ENCODE measurements at regions of chr1 and their contacts with region 1.

Region 1: GRCh38 chr1:1206376-1207260 is at the start of gene TNFRSF18:
- DNase-seq: no peak
- ATAC-seq: peak; percentile 32
- H3K4me3 Mint-ChIP-seq: peak within 1 kb of the TSS; percentile 61
- H3K27ac Mint-ChIP-seq: peak within 1 kb of the TSS; percentile 43
- H3K4me1 Mint-ChIP-seq: peaks cover 31% of the 10 kb centered on the region
- H3K27me3 Mint-ChIP-seq: no peaks in the 10 kb centered on the region
- total RNA-seq, gene TNFRSF18: 17.5 to 18.8 TPM

Region 2: DNA sequence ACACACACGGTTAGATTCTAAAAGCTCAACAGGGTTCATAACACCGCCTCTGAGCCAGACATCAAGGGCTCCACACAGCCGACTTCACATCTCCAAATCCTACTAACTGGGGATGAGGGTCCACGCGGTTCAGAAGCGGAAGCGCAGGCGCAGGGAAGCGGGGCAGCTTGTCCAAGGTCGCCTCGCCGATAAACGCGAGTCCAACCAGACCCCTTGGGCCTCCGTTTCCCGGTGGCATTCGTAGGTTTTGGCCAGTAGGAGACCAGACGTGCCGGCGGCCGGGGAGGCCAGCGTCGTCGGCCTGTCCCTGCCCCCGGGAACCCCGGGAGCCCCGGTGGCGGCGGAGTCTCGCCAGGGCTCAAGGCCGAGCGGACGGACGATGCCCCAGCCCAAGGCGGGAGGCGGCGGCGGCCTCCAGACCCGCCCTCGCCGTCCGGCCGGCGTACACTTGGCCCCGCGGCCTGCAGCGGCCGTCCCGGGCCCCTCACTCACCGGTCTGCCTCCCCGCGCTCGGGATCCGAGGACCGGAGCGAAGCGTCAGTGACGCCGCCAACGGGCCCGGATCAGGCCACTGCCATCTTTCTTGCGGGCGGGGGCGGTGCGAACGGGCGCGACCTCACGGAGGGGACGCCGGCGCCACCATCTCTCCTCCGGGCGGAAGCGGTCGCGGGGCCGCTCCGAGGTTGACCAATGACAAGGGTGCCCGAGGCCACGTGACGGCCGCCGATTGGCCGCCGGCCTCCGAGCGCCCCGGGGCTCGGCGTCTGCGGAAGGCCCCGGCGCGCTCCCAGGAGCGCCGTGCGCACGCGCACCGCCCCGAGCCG is 25.0 kb after region 1 on chr1 and contains the start of gene SDF4:
- CTCF ChIA-PET with region 1: no interaction called
- POLR2A ChIA-PET with region 1: interaction called, 10 read pairs
- DNase-seq: peak; percentile 97
- ATAC-seq: peak; percentile 96
- H3K4me3 Mint-ChIP-seq: peak within 1 kb of the TSS; percentile 95
- H3K27ac Mint-ChIP-seq: peak within 1 kb of the TSS; percentile 94
- H3K4me1 Mint-ChIP-seq: peaks cover 31% of the 10 kb centered on the region
- H3K27me3 Mint-ChIP-seq: no peaks in the 10 kb centered on the region
- total RNA-seq, gene SDF4: 96.9 to 99.3 TPM